ENCODE measurements at regions of chr7 and their contacts with region 1.

Region 1: DNA sequence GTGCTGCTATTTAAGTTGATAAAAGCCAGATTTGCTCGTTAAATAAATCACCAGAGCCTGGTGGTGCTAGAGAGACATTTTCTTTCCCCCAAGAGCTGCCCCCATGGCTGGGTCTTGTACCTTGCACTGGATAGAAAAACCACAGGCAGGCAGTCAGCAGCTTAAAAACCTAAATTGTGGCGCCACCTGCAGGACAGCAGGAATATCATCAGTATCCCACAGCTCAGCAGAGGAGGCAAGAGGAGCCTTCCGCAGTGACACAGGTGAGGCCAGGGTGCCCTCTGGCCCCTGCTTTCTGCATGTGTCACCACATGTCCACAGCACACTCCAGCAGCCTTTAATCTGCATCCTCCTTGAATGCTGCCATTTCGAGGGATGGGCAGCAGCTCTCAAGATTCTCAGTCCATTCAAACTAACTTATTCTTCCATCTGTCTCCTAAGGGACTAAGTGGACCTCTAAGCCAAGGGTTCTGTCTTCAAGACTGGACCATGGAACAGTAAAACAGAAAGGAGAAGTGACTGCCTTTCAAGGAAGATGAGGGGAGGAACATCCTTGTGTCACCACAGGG is 4.5 kb upstream of the PLXNA4 start:
- DNase-seq: peak; percentile 36
- H3K4me3 ChIP-seq: no peak overlapping the region
- H3K27ac ChIP-seq: no peak overlapping the region
- H3K27me3 ChIP-seq: peaks cover 29% of the 10 kb centered on the region
- CTCF ChIP-seq: peak; percentile 75

Region 2: GRCh38 chr7:131688738-131689661 is 891.8 kb before region 1 on chr7:
- CTCF ChIA-PET with region 1: interaction called, 22 read pairs
- POLR2A ChIA-PET with region 1: no interaction called
- DNase-seq: peak; percentile 6
- H3K4me3 ChIP-seq: no peak overlapping the region
- H3K27ac ChIP-seq: no peak overlapping the region
- H3K27me3 ChIP-seq: peaks cover 31% of the 10 kb centered on the region
- CTCF ChIP-seq: peak; percentile 95

Region 3: GRCh38 chr7:132318352-132319318 is 262.2 kb before region 1 on chr7:
- CTCF ChIA-PET with region 1: interaction called, 21 read pairs
- POLR2A ChIA-PET with region 1: no interaction called
- DNase-seq: peak; percentile 67
- H3K4me3 ChIP-seq: no peak overlapping the region
- H3K27ac ChIP-seq: no peak overlapping the region
- H3K27me3 ChIP-seq: no peaks in the 10 kb centered on the region
- CTCF ChIP-seq: peak; percentile 90

Region 4: DNA sequence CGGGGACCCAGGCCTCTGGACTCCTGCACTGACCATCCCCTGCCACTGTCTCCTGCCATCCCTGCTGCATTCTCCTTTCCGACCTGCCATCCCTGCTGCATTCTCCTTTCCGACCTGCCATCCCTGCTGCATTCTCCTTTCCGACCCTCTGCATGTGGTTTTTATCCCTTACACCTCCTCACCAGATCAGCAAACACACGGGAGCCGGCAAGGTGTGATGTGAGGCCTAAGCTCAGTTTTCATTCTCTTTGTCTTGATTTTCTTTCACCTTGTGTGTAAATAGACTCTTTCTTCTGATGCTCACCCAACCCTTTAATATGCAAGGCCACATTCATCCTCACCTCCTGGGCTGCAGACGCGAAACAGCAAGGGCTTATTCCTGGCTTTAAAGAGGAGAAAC is 16.0 kb before region 1 on chr7:
- CTCF ChIA-PET with region 1: interaction called, 12 read pairs
- POLR2A ChIA-PET with region 1: no interaction called
- DNase-seq: no peak
- H3K4me3 ChIP-seq: no peak overlapping the region
- H3K27ac ChIP-seq: no peak overlapping the region
- H3K27me3 ChIP-seq: peaks cover 10% of the 10 kb centered on the region
- CTCF ChIP-seq: no peak